IMR-90 (cell line): ENCODE measurements at regions of chr1 and their contacts with region 1.

Region 1: GRCh38 chr1:35707601-35708440 is 10.9 kb downstream of the C1orf216 start:
- DNase-seq: no peak
- ATAC-seq: peak; percentile 75
- H3K4me3 ChIP-seq: peak overlapping the region; percentile 45
- H3K27ac ChIP-seq: no peak overlapping the region
- H3K4me1 ChIP-seq: no peaks in the 10 kb centered on the region
- H3K27me3 ChIP-seq: peaks cover 29% of the 10 kb centered on the region
- CTCF ChIP-seq: no peak
- POLR2A ChIP-seq: no peak
- RAD21 ChIP-seq: no peak

Region 2: DNA sequence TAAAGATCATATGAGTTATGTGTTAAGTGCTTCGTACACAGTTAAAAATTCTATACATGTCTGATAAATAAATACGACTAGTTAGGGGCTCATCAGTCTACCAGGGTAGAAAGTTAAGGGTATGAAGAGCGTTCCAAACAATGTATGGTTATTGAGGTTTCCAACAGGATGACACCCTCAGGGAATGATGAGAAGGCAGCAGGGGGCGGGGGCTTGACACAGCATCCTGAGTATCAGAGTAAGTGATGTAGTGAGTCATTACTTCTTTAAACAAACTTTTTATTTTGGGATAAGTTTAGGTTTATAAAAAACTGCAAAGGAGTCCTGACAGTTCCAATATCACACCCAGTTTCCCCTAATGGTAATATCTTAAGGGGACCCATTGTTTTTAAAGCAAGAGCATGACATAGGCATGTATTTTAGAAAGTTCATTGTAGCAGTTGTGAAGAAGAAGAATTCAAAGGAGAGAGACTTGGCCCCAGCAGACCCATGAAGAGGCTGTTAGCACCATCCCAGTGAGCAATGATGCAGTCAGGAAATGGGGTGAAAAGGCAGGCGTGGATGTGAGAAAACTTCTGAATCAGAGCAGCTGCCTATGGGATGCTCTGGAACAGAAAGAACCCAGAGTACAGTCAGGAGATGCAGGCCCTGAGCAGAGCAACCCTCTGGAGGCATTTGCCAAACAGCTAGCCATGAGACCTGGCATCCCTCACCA is 51.5 kb before region 1 on chr1:
- CTCF ChIA-PET with region 1: no interaction called
- POLR2A ChIA-PET with region 1: no interaction called
- dilution Hi-C with region 1: no loop called
- in situ Hi-C with region 1: no loop called
- intact Hi-C with region 1: loop called (anchors 5 kb)
- DNase-seq: peak; percentile 76
- ATAC-seq: peak; percentile 81
- H3K4me3 ChIP-seq: no peak overlapping the region
- H3K27ac ChIP-seq: no peak overlapping the region
- H3K4me1 ChIP-seq: peaks cover 3% of the 10 kb centered on the region; the same call in 1 of the 2 replicates
- H3K27me3 ChIP-seq: peaks cover 9% of the 10 kb centered on the region
- CTCF ChIP-seq: no peak
- POLR2A ChIP-seq: no peak
- RAD21 ChIP-seq: no peak

Region 3: DNA sequence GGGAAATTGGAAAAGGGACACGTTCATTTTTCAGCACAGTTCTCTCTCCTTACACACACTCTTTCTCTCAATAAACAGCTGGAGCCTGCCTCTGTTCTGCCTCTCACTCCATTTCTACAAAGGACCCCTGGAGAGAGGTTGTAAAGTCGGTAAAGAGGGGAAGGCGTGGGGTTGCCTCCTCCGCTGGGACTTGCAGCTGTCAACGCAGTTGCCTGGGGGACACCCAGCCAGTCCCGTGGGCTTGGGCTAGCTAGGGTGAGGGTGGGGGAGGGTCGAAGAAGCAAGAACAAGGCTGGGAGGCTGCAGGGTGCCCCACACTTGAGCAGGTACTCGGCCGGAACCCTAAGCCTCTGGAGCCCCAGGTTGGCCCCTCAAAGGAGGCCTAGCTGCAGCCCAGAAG is 16.7 kb before region 1 on chr1:
- CTCF ChIA-PET with region 1: no interaction called
- POLR2A ChIA-PET with region 1: no interaction called
- dilution Hi-C with region 1: no loop called
- in situ Hi-C with region 1: no loop called
- intact Hi-C with region 1: no loop called
- DNase-seq: no peak
- ATAC-seq: no peak
- H3K4me3 ChIP-seq: no peak overlapping the region
- H3K27ac ChIP-seq: no peak overlapping the region
- H3K4me1 ChIP-seq: no peaks in the 10 kb centered on the region
- H3K27me3 ChIP-seq: peaks cover 37% of the 10 kb centered on the region
- CTCF ChIP-seq: no peak
- POLR2A ChIP-seq: no peak
- RAD21 ChIP-seq: no peak

Region 4: DNA sequence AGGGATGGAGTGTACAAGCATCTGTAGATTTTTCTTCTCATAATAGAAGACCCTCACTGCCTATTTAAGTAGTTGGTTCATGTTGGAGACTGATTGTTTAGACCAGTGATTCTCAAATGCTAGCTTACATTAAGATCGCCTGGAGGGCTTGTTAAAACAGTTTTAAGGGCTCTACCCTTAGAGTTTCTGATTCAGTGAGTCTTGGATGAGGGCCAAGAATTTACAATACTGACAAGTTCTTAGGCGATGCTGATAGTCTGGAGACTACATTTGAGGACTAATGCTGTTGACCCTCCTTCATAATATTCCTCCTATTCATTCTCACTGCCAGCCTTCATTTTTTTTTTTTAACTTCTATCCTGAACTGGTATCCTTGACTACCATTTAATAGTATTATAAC is 207.9 kb after region 1 on chr1:
- CTCF ChIA-PET with region 1: no interaction called
- POLR2A ChIA-PET with region 1: no interaction called
- dilution Hi-C with region 1: no loop called
- in situ Hi-C with region 1: no loop called
- intact Hi-C with region 1: no loop called
- DNase-seq: peak; percentile 48
- ATAC-seq: no peak; the same call in 1 of the 2 replicates
- H3K4me3 ChIP-seq: no peak overlapping the region
- H3K27ac ChIP-seq: no peak overlapping the region
- H3K4me1 ChIP-seq: no peaks in the 10 kb centered on the region
- H3K27me3 ChIP-seq: no peaks in the 10 kb centered on the region
- CTCF ChIP-seq: no peak
- POLR2A ChIP-seq: no peak
- RAD21 ChIP-seq: no peak